A673 (cell line): ENCODE measurements at regions of chr19 and their contacts with region 1.

Region 1: GRCh38 chr19:17390665-17391370 is 3.2 kb downstream of the CCDC194 start:
- DNase-seq: peak; percentile 95
- H3K4me3 ChIP-seq: peak overlapping the region; percentile 48
- H3K27ac ChIP-seq: no peak overlapping the region
- H3K4me1 ChIP-seq: peaks cover 5% of the 10 kb centered on the region
- H3K27me3 ChIP-seq: no peaks in the 10 kb centered on the region
- CTCF ChIP-seq: peak; percentile 64

Region 2: DNA sequence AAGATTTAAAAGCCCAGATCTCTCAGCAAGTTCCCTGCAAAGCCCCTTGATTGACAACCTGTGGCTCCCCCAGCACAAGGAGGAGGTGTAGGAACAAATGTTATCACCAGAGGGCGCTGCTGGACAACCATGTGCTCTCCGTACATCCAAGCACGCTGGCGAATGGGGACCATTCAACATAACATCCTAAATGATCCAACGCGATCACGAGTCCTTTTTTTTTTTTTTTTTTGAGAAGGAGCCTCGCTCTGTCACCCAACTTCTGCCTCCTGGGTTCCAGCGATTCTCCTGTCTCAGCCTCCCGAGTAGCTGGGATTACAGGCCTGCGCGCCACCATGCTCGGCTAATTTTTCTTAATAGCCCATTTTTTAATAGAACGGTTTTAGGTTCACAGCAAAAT is 619.2 kb before region 1 on chr19:
- CTCF ChIA-PET with region 1: interaction called, 9 read pairs
- POLR2A ChIA-PET with region 1: no interaction called
- intact Hi-C with region 1: loop called (anchors 10 kb)
- DNase-seq: peak; percentile 90
- H3K4me3 ChIP-seq: no peak overlapping the region
- H3K27ac ChIP-seq: no peak overlapping the region
- H3K4me1 ChIP-seq: no peaks in the 10 kb centered on the region
- H3K27me3 ChIP-seq: no peaks in the 10 kb centered on the region
- CTCF ChIP-seq: peak; percentile 84

Region 3: DNA sequence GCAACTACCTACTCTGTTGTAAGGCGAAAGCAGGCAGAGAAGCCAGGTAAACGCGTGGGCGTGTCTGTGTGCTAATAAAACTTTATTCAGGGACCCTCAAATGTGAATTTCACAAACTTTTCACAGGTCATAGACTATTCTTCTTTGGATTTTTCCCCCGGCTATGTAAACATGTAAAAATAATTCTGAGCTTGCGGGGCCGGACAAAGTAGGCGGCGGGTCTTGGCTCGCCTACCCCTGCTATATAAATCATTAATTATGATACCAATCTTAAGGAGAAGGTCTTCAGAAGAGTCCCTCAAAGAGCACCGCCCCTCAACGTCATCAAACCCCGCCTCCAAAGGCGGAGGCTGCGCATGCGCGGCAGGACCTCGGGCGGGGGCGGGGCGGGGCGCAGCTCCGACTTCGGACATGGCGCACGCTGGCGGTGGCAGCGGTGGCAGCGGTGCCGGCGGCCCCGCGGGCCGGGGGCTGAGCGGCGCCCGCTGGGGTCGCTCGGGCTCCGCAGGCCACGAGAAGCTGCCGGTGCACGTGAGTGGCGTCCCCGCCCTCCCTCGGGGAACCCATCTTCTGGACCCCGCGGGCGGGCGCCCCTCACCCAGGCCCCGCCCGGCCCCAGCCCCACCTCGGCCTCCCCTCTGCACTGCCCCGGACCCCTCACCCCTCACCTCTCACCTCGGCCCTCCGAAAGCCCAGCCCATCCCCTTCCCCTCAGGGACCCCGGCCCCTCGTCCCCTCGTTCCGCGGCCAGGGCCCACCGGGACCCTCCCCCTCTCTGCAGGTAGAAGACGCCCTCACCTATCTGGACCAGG is 561.6 kb before region 1 on chr19 and contains the start of gene SIN3B:
- CTCF ChIA-PET with region 1: no interaction called
- POLR2A ChIA-PET with region 1: no interaction called
- intact Hi-C with region 1: no loop called
- DNase-seq: peak; percentile 94
- H3K4me3 ChIP-seq: peak within 1 kb of the TSS; percentile 87
- H3K27ac ChIP-seq: peak within 1 kb of the TSS; percentile 73
- H3K4me1 ChIP-seq: peaks cover 19% of the 10 kb centered on the region
- H3K27me3 ChIP-seq: no peaks in the 10 kb centered on the region
- CTCF ChIP-seq: no peak
- total RNA-seq, gene SIN3B: 76.7 and 80.0 TPM in 2 replicates

Region 4: DNA sequence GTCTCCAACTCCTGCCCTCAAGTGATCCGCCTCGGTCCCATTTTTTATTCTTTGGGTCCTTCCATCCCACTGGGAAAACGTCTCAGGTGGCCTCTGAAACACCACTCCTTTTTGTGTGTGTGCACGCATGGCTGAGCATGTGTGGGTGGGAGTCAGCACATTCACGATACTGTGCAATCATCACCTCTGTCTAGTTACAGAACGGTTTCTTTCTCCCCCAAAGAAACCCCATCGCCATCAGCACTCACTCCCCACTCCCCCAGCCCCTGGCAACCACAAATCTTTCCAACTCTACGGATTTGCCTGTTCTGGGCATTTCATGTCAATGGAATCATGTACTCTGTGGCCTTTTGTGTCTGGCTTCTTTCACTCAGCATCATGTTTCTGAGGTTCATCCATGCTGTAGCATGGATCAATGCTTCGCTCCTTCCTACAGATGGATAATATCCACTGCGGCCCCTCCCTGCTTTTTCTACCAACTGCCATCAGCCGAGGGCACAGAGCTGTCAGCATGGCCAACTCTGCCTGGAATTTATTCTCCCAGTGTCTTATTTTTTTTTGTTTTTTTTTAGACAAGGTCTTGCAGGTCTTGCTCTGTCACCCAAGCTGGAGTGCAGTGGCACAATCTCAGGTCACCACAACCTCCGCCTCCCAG is 492.3 kb before region 1 on chr19:
- CTCF ChIA-PET with region 1: interaction called, 11 read pairs
- POLR2A ChIA-PET with region 1: no interaction called
- intact Hi-C with region 1: no loop called
- DNase-seq: no peak
- H3K4me3 ChIP-seq: no peak overlapping the region
- H3K27ac ChIP-seq: no peak overlapping the region
- H3K4me1 ChIP-seq: peaks cover 11% of the 10 kb centered on the region
- H3K27me3 ChIP-seq: no peaks in the 10 kb centered on the region
- CTCF ChIP-seq: no peak

Region 5: DNA sequence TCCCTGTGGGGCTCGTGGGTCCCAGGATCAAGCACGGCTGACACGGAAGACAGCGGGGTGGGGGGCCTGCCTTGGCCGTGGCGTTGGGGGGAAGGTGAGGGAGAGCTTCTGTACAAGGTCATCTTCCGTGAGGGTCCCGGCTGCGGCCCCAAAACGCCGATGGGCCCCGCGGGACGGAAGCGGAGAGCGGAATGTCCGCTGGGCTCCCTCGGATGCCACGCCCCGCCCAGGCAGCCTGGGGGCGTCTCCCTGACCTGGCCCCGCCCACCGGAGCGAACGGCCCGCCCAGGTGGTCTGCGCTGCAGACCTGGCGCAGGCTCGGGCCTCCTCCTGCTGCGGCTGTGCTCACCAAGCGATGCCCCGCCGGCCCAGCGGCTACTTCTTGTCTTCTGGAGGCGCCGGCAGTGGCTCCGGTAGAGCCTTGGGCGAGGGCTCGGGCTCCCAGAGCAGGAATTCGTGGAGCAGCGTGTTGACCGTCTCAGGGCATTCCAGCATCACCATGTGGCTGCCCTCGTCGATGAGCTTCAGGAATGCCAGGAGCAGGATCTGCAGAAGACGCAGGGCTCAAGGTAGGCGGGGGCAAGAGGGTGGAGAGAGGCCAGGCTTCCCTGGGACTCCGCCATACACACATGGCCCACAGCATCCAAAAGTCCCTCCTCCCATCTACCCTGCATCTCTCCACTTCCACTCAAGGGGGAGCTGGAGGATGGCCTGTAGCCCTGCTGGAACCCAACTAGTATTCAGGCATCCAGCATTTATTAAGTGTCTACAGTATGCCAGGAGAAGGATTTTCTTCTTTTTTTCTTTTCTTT is 98.3 kb before region 1 on chr19:
- CTCF ChIA-PET with region 1: interaction called, 9 read pairs
- POLR2A ChIA-PET with region 1: no interaction called
- intact Hi-C with region 1: loop called (anchors 1 kb)
- DNase-seq: peak; percentile 95
- H3K4me3 ChIP-seq: peak overlapping the region; percentile 54
- H3K27ac ChIP-seq: peak overlapping the region; percentile 21
- H3K4me1 ChIP-seq: peaks cover 8% of the 10 kb centered on the region
- H3K27me3 ChIP-seq: no peaks in the 10 kb centered on the region
- CTCF ChIP-seq: peak; percentile 77

Region 6: DNA sequence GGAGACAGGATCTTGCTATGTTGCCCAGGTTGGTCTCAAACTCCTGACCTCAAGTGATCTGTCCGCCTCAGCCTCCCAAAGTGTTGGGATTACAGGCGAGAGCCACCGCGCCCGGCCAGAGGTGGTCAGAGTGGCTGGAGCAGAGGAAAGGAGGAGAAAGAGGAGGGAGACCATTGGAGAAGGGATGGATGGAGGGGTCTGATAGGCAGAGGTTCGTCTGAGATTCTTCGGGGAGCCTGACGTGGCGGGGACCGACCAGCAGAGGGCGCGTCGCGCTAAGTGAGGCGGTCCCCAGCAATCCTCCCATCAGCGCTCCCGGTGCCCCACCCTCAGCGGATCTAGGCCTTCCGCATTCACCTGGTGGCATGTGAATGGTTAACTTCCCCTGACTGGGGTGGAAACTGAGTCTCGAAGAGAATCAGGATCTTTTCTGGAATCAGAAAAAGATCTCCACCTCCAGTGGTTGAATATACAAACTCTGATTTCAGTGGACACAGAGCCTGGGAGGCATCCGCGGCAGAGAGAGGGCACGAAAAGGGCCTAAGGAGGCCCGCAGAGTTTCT is 44.6 kb before region 1 on chr19:
- CTCF ChIA-PET with region 1: interaction called, 8 read pairs
- POLR2A ChIA-PET with region 1: no interaction called
- intact Hi-C with region 1: loop called (anchors 1 kb)
- DNase-seq: peak; percentile 77
- H3K4me3 ChIP-seq: no peak overlapping the region
- H3K27ac ChIP-seq: no peak overlapping the region
- H3K4me1 ChIP-seq: no peaks in the 10 kb centered on the region
- H3K27me3 ChIP-seq: no peaks in the 10 kb centered on the region
- CTCF ChIP-seq: peak; percentile 92

Region 7: GRCh38 chr19:17420467-17421055 is 29.7 kb after region 1 on chr19:
- CTCF ChIA-PET with region 1: no interaction called
- POLR2A ChIA-PET with region 1: no interaction called
- intact Hi-C with region 1: no loop called
- DNase-seq: no peak
- H3K4me3 ChIP-seq: peak overlapping the region; percentile 92
- H3K27ac ChIP-seq: peak overlapping the region; percentile 81
- H3K4me1 ChIP-seq: peaks cover 5% of the 10 kb centered on the region
- H3K27me3 ChIP-seq: no peaks in the 10 kb centered on the region
- CTCF ChIP-seq: no peak

Region 8: DNA sequence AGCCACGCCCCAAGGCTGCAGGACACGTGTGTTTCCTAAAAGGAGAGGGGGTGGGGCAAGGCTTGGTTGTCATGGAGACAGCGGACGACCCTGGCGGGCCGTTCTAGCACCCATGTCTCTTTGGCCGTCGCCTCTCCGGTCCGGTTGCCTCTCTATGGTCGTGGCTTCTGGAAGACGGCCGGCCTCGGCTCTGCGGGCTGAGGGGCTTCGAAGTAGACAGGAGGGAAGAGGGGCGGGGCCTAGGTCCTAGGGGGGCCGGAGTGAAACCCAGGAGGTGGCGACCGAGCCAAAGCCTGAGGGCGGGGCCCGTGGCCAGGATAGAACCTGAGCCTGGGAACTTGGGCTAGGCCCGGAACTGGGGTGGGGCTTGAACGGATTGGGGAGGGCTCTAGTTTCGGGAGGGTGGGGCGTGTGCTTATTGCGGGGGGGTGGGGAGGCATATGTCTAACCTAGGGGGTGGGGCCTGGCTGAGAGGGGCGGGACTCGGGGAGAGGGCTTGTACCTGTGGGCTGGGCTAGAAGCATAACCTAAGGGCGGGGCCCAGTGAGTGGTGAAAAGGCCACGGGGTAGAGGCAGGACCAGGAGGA is 78.8 kb after region 1 on chr19:
- CTCF ChIA-PET with region 1: interaction called, 3 read pairs
- POLR2A ChIA-PET with region 1: no interaction called
- intact Hi-C with region 1: loop called (anchors 2 kb)
- DNase-seq: peak; percentile 97
- H3K4me3 ChIP-seq: peak overlapping the region; percentile 84
- H3K27ac ChIP-seq: peak overlapping the region; percentile 63
- H3K4me1 ChIP-seq: peaks cover 8% of the 10 kb centered on the region
- H3K27me3 ChIP-seq: no peaks in the 10 kb centered on the region
- CTCF ChIP-seq: no peak